ENCODE measurements at regions of chr7 and their contacts with region 1.

Region 1: DNA sequence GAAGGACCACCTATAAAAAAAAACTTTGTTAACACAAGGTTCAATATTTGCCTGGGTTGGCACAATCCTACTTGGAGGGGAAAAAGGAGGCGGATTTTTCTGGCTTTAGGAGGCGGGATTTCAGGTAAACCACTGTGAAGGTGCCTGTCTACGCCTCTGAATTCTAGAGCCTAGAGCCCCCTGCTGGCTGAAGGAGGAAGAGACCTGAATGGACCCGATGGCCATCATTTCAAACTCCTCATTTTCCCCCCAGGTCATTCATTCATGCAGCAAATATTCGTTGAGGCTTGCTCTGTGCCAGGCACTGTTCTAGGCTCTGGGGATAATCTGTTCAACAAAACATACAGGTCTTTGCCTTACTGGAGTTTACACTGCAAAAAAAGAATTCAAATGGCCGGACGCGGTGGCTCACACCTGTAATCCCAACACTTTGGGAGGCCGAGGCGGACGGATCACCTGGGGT is 90.3 kb upstream of the NFE2L3 start:
- DNase-seq: peak; percentile 75
- H3K4me3 ChIP-seq: no peak overlapping the region
- H3K27ac ChIP-seq: no peak overlapping the region
- H3K4me1 ChIP-seq: no peaks in the 10 kb centered on the region
- CTCF ChIP-seq: peak; percentile 94

Region 2: GRCh38 chr7:25996006-25996408 is 65.7 kb before region 1 on chr7:
- CTCF ChIA-PET with region 1: no interaction called
- POLR2A ChIA-PET with region 1: no interaction called
- intact Hi-C with region 1: loop called (anchors 10 kb)
- DNase-seq: no peak
- H3K4me3 ChIP-seq: no peak overlapping the region
- H3K27ac ChIP-seq: no peak overlapping the region
- H3K4me1 ChIP-seq: no peaks in the 10 kb centered on the region
- CTCF ChIP-seq: peak; percentile 47

Measured in OCI-LY7 (cell line).